ENCODE measurements at regions of chrX and their contacts with region 1.

Region 1: GRCh38 chrX:19457662-19458061 is 57.6 kb downstream of the MAP3K15 start:
- DNase-seq: no peak
- ATAC-seq: no peak
- H3K4me3 ChIP-seq: no peak overlapping the region
- H3K27ac ChIP-seq: no peak overlapping the region
- H3K4me1 ChIP-seq: no peaks in the 10 kb centered on the region
- H3K27me3 ChIP-seq: no peaks in the 10 kb centered on the region; a peak in 1 of 4 replicates
- CTCF ChIP-seq: no peak
- EP300 ChIP-seq: no peak
- POLR2A ChIP-seq: no peak
- RAD21 ChIP-seq: no peak

Region 2: GRCh38 chrX:19392703-19393102 is 65.0 kb before region 1 on chrX:
- CTCF ChIA-PET with region 1: no interaction called
- POLR2A ChIA-PET with region 1: no interaction called
- RAD21 ChIA-PET with region 1: no interaction called
- SMC1A ChIA-PET with region 1: no interaction called
- in situ Hi-C with region 1: loop called (anchors 10 kb)
- intact Hi-C with region 1: no loop called
- DNase-seq: no peak
- ATAC-seq: no peak
- H3K4me3 ChIP-seq: no peak overlapping the region
- H3K27ac ChIP-seq: no peak overlapping the region
- H3K4me1 ChIP-seq: no peaks in the 10 kb centered on the region
- H3K27me3 ChIP-seq: no peaks in the 10 kb centered on the region
- CTCF ChIP-seq: no peak
- EP300 ChIP-seq: no peak
- POLR2A ChIP-seq: no peak
- RAD21 ChIP-seq: no peak

Measured in GM12878 (cell line).